Activated CD4-positive, alpha-beta memory T cell treated with anti-CD3 and anti-CD28 coated beads for 36 hours (primary cell): ENCODE measurements at regions of chr7 and their contacts with region 1.

Region 1: GRCh38 chr7:7257899-7258692 is 75.8 kb downstream of the C1GALT1 start:
- DNase-seq: no peak
- H3K4me3 Mint-ChIP-seq: no peak overlapping the region
- H3K27ac Mint-ChIP-seq: peak overlapping the region; percentile 73
- H3K4me1 Mint-ChIP-seq: peaks cover 21% of the 10 kb centered on the region
- H3K27me3 Mint-ChIP-seq: no peaks in the 10 kb centered on the region

Region 2: GRCh38 chr7:7190142-7190541 is 68.0 kb before region 1 on chr7:
- CTCF ChIA-PET with region 1: no interaction called
- POLR2A ChIA-PET with region 1: no interaction called
- intact Hi-C with region 1: loop called (anchors 2 kb)
- DNase-seq: no peak
- H3K4me3 Mint-ChIP-seq: no peak overlapping the region
- H3K27ac Mint-ChIP-seq: no peak overlapping the region
- H3K4me1 Mint-ChIP-seq: peaks cover 48% of the 10 kb centered on the region
- H3K27me3 Mint-ChIP-seq: no peaks in the 10 kb centered on the region